ENCODE measurements at regions of chr4 and their contacts with region 1.

Region 1: GRCh38 chr4:74098450-74098994 is 473 bp downstream of the CXCL2 start:
- DNase-seq: no peak
- H3K4me3 ChIP-seq: peak overlapping the region; percentile 71
- H3K27ac ChIP-seq: no peak overlapping the region
- H3K27me3 ChIP-seq: no peaks in the 10 kb centered on the region
- CTCF ChIP-seq: no peak

Region 2: DNA sequence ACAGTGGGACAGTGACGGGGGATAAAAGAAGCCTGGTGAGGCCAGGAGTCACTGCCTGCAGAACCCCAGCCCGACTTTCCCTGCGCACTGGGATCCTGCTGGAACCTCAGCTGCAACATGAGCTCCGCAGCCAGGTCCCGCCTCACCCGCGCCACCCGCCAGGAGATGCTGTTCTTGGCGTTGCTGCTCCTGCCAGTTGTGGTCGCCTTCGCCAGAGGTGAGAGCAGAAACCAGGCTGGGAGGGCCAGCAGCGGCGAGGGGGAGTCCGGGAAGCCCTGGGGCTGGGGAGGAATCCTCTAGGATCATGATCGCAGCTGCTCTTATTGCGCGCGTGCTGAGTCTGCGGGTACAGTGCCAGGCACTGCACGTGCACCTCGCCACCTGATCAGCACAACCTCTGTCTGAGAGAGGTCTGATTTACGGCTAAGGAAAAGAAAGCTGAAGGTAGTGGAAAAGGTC is 245.2 kb before region 1 on chr4 and contains the start of gene PF4V1:
- CTCF ChIA-PET with region 1: interaction called, 11 read pairs
- POLR2A ChIA-PET with region 1: no interaction called
- DNase-seq: no peak
- H3K4me3 ChIP-seq: peak within 1 kb of the TSS; percentile 40
- H3K27ac ChIP-seq: no peak within 1 kb of the TSS
- H3K27me3 ChIP-seq: no peaks in the 10 kb centered on the region
- CTCF ChIP-seq: peak; percentile 53
- polyA plus RNA-seq, gene PF4V1: 0.20 and 0.83 TPM in 2 replicates

Region 3: DNA sequence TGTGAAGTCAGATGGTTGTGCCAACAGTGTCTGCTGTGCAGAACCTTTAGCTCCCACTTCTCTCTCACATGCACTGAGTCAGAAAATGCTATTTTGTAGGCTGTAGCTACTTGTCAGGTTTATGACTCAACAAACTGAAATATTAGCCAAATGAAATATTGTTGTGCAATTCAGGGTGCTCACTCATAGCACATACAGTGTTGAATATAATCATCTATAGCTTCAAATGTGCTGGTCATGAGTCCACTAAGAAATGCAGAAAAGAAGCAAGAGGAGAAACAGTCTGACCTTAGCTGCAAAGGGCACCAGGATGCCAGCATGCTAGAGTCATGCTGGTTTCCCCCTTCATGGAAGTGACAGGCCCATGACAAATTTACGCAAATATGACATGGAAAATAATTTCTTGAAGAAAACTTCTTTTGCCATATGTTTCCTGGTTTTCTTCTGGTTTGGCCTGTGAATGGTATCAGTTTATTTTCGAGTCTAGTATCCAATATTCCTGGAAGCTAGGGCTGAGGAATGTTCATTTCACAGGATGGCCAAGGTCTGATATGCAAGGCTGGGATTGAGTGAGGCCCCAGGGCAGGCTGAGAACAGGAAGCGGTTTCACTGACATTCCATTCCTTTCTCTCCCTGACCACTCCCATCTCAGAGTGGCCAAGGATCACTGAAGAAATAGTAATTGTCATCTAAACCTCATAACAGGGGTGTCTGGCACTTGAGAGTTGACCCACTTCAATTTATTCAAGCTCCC is 10.8 kb after region 1 on chr4:
- CTCF ChIA-PET with region 1: interaction called, 4 read pairs
- POLR2A ChIA-PET with region 1: interaction called, 32 read pairs
- DNase-seq: peak; percentile 74
- H3K4me3 ChIP-seq: no peak overlapping the region
- H3K27ac ChIP-seq: peak overlapping the region; percentile 92
- H3K27me3 ChIP-seq: no peaks in the 10 kb centered on the region
- CTCF ChIP-seq: no peak

Region 4: GRCh38 chr4:74258963-74259362 is 160.4 kb after region 1 on chr4:
- CTCF ChIA-PET with region 1: no interaction called
- POLR2A ChIA-PET with region 1: no interaction called
- DNase-seq: no peak
- H3K4me3 ChIP-seq: no peak overlapping the region
- H3K27ac ChIP-seq: no peak overlapping the region
- H3K27me3 ChIP-seq: no peaks in the 10 kb centered on the region
- CTCF ChIP-seq: no peak

Region 5: DNA sequence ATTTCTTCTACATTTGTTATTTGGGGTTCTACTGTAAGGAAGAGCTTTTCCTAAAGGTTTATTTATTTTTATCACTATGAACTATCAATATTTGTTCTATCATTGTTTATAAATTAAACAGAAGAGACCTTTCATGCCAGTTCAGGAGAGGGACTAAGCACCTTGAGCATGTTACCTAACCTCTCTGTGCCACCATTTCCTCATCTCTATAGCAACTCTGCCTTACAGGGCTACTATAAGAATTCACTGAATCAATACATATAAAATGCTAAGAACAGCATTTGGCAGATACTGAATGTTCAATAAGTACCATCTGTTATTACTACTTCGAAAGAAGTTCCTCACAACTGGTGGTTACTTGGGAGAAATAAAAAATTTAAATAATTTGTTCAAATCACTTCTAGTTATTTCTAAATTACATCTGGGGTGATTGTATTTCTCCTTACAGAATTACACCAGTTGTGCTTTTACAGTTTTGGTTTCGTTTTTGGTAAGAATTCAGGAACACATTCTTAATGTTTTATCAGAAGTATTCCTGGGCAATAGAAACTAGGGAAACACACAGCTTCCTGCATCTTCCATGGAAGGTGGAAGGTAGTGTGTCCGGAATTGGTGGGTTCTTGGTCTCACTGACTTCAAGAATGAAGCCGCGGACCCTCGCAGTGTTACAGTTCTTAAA is 299.4 kb after region 1 on chr4:
- CTCF ChIA-PET with region 1: no interaction called
- POLR2A ChIA-PET with region 1: no interaction called
- DNase-seq: no peak
- H3K4me3 ChIP-seq: no peak overlapping the region
- H3K27ac ChIP-seq: no peak overlapping the region
- H3K27me3 ChIP-seq: no peaks in the 10 kb centered on the region
- CTCF ChIP-seq: no peak